PC-3 (cell line): ENCODE measurements at regions of chr5 and their contacts with region 1.

Region 1: GRCh38 chr5:99706160-99706559 is 777.4 kb upstream of the CHD1 start:
- DNase-seq: no peak
- ATAC-seq: no peak
- H3K4me3 ChIP-seq: no peak overlapping the region
- H3K27ac ChIP-seq: no peak overlapping the region
- H3K4me1 ChIP-seq: peaks cover 15% of the 10 kb centered on the region
- H3K27me3 ChIP-seq: no peaks in the 10 kb centered on the region
- CTCF ChIP-seq: no peak

Region 2: DNA sequence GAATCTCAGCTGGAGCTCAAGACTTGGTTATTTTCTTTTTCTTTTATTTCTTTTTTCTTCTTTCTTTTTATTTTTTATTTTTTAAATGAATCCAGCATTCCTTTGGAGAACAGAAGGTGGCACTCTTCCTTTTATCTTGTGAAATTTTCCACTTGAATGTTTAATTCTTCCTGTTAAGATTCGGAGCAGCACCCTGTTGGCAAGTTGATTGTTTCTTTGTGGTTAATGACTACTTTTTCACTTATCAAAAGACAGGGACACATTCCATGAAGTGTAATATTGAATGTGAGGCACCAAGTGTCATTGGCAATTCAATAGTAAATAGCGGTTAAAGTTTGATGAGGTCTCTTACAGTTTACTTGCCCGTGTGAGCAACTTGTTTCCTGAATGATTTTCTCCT is 536.9 kb before region 1 on chr5:
- CTCF ChIA-PET with region 1: no interaction called
- POLR2A ChIA-PET with region 1: no interaction called
- intact Hi-C with region 1: loop called (anchors 5 kb)
- DNase-seq: peak; percentile 47
- ATAC-seq: peak; percentile 54
- H3K4me3 ChIP-seq: no peak overlapping the region
- H3K27ac ChIP-seq: no peak overlapping the region
- H3K4me1 ChIP-seq: no peaks in the 10 kb centered on the region
- H3K27me3 ChIP-seq: peaks cover 11% of the 10 kb centered on the region; the same call in 1 of the 2 replicates
- CTCF ChIP-seq: peak; percentile 67

Region 3: DNA sequence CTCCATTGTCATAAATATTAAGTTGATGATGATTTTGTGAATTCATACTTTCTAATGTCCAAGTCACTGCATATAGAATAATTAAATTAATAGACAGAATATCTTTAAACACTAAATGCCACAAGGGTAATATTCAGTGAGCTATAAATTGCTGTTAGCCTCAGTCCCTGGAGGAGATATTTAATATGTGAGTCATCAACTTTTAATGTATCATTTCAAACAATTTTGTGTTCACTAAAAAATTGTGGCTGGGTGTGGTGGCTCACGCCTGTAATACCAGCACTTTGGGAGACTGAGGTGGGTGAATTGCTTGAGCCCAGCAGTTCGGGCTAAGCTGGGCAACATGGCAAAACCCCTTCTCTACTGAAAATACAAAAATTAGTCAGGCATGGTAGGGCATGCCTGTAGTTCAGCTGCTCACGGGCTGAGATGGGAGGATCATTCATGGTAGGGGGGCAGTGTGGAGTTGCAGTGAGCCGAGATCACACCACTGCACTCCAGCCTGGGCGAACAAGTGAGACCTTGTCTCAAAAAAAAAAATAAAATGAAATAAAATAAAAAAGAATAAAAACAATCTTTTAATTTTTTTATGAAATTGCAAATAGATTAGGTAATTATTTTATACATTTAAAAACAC is 60.0 kb before region 1 on chr5:
- CTCF ChIA-PET with region 1: no interaction called
- POLR2A ChIA-PET with region 1: interaction called, 3 read pairs
- intact Hi-C with region 1: loop called (anchors 2 kb)
- DNase-seq: peak; percentile 74
- ATAC-seq: peak; percentile 77
- H3K4me3 ChIP-seq: peak overlapping the region; percentile 6; the same call in 1 of the 2 replicates
- H3K27ac ChIP-seq: peak overlapping the region; percentile 66
- H3K4me1 ChIP-seq: peaks cover 25% of the 10 kb centered on the region
- H3K27me3 ChIP-seq: no peaks in the 10 kb centered on the region
- CTCF ChIP-seq: no peak; the same call in 1 of the 2 replicates

Region 4: GRCh38 chr5:99721506-99721905 is 15.3 kb after region 1 on chr5:
- CTCF ChIA-PET with region 1: no interaction called
- POLR2A ChIA-PET with region 1: no interaction called
- intact Hi-C with region 1: no loop called
- DNase-seq: peak; percentile 75
- ATAC-seq: peak; percentile 98
- H3K4me3 ChIP-seq: no peak overlapping the region
- H3K27ac ChIP-seq: no peak overlapping the region
- H3K4me1 ChIP-seq: peaks cover 14% of the 10 kb centered on the region
- H3K27me3 ChIP-seq: no peaks in the 10 kb centered on the region
- CTCF ChIP-seq: no peak

Region 5: GRCh38 chr5:100004968-100005367 is 298.8 kb after region 1 on chr5:
- CTCF ChIA-PET with region 1: no interaction called
- POLR2A ChIA-PET with region 1: no interaction called
- intact Hi-C with region 1: loop called (anchors 10 kb)
- DNase-seq: peak; percentile 93
- ATAC-seq: peak; percentile 100
- H3K4me3 ChIP-seq: no peak overlapping the region
- H3K27ac ChIP-seq: 0 out of 2 replicates have a peak overlapping the region, but pooled peaks have one; percentile 8
- H3K4me1 ChIP-seq: peaks cover 9% of the 10 kb centered on the region
- H3K27me3 ChIP-seq: no peaks in the 10 kb centered on the region
- CTCF ChIP-seq: no peak